ENCODE measurements at regions of chr3 and their contacts with region 1.

Region 1: DNA sequence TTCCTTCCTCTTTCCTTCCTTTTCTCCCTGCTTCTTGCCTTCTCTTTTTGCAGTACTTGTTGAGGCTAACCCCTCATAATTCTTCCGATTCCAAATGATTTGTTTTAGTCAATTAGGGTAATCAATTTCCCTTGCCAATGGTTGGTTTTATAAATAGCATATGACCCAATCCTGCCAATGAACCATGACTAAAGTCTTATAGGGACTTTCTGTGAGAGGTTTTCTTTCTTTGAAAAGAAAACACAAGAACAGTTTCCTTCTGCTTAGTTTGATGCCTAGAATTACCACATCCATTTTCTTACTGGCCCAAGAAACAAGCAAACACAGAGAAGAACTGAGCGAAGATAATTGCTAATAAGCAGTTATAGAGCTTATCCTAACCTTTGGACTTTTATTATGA is 292.5 kb upstream of the SATB1 start:
- DNase-seq: no peak
- ATAC-seq: peak; percentile 54
- H3K4me3 Mint-ChIP-seq: no peak overlapping the region
- H3K27ac Mint-ChIP-seq: peak overlapping the region; percentile 97
- H3K4me1 Mint-ChIP-seq: peaks cover 74% of the 10 kb centered on the region
- H3K27me3 Mint-ChIP-seq: no peaks in the 10 kb centered on the region
- CTCF ChIP-seq: no peak

Region 2: GRCh38 chr3:18649666-18650363 is 67.8 kb before region 1 on chr3:
- CTCF ChIA-PET with region 1: interaction called, 13 read pairs
- POLR2A ChIA-PET with region 1: interaction called, 8 read pairs
- intact Hi-C with region 1: no loop called
- DNase-seq: peak; percentile 82
- ATAC-seq: peak; percentile 88
- H3K4me3 Mint-ChIP-seq: peak overlapping the region; percentile 6
- H3K27ac Mint-ChIP-seq: peak overlapping the region; percentile 94
- H3K4me1 Mint-ChIP-seq: peaks cover 72% of the 10 kb centered on the region
- H3K27me3 Mint-ChIP-seq: no peaks in the 10 kb centered on the region
- CTCF ChIP-seq: no peak

Region 3: GRCh38 chr3:18679238-18679637 is 38.4 kb before region 1 on chr3:
- CTCF ChIA-PET with region 1: interaction called, 5 read pairs
- POLR2A ChIA-PET with region 1: interaction called, 5 read pairs
- intact Hi-C with region 1: loop called (anchors 5 kb)
- DNase-seq: peak; percentile 65
- ATAC-seq: peak; percentile 90
- H3K4me3 Mint-ChIP-seq: peak overlapping the region; percentile 55
- H3K27ac Mint-ChIP-seq: peak overlapping the region; percentile 93
- H3K4me1 Mint-ChIP-seq: peaks cover 78% of the 10 kb centered on the region
- H3K27me3 Mint-ChIP-seq: no peaks in the 10 kb centered on the region
- CTCF ChIP-seq: no peak

Measured in activated CD8-positive, alpha-beta T cell treated with anti-CD3 and anti-CD28 coated beads for 36 hours (primary cell).